Mucosa of descending colon (tissue), 3 donors: ENCODE measurements at regions of chr21 and their contacts with region 1.

Region 1: GRCh38 chr21:41068967-41069642 is 98.9 kb upstream of the BACE2 start:
- DNase-seq: peak; percentile 65 to 78 (median 69)
- ATAC-seq: peak; percentile 87
- H3K4me3 ChIP-seq: no peak overlapping the region
- H3K4me1 ChIP-seq: peaks cover 4% of the 10 kb centered on the region
- CTCF ChIP-seq: peak; percentile 78

Region 2: GRCh38 chr21:40143822-40144525 is 925.1 kb before region 1 on chr21:
- intact Hi-C with region 1: loop called in 1 of 2 experiments (anchors 5 kb)
- DNase-seq: peak in 2 of 3 donors; percentile 39 to 67
- ATAC-seq: peak; percentile 50
- H3K4me3 ChIP-seq: no peak overlapping the region
- H3K4me1 ChIP-seq: no peaks in the 10 kb centered on the region
- CTCF ChIP-seq: peak; percentile 59

Region 3: GRCh38 chr21:40466893-40467501 is 602.1 kb before region 1 on chr21:
- intact Hi-C with region 1: loop called in 1 of 2 experiments (anchors 5 kb)
- DNase-seq: peak in 1 of 3 donors; percentile 25
- ATAC-seq: no peak
- H3K4me3 ChIP-seq: no peak overlapping the region
- H3K4me1 ChIP-seq: no peaks in the 10 kb centered on the region
- CTCF ChIP-seq: no peak